Panc1 (cell line): ENCODE measurements at regions of chrX and their contacts with region 1.

Region 1: GRCh38 chrX:145213504-145213903 is 33.8 kb upstream of the SPANXN1 start:
- DNase-seq: no peak
- ATAC-seq: no peak
- H3K4me3 ChIP-seq: no peak overlapping the region
- H3K27ac ChIP-seq: no peak overlapping the region
- H3K4me1 ChIP-seq: no peaks in the 10 kb centered on the region
- H3K27me3 ChIP-seq: no peaks in the 10 kb centered on the region
- CTCF ChIP-seq: peak; percentile 40; the same call in 1 of the 2 replicates

Region 2: GRCh38 chrX:144918936-144919335 is 294.6 kb before region 1 on chrX:
- CTCF ChIA-PET with region 1: no interaction called
- POLR2A ChIA-PET with region 1: no interaction called
- in situ Hi-C with region 1: no loop called
- intact Hi-C with region 1: no loop called
- DNase-seq: no peak
- ATAC-seq: no peak
- H3K4me3 ChIP-seq: no peak overlapping the region
- H3K27ac ChIP-seq: no peak overlapping the region
- H3K4me1 ChIP-seq: no peaks in the 10 kb centered on the region
- H3K27me3 ChIP-seq: no peaks in the 10 kb centered on the region
- CTCF ChIP-seq: no peak

Region 3: GRCh38 chrX:145817331-145818185 is 604.1 kb after region 1 on chrX and contains the start of gene SLITRK2:
- CTCF ChIA-PET with region 1: no interaction called
- POLR2A ChIA-PET with region 1: no interaction called
- in situ Hi-C with region 1: no loop called
- intact Hi-C with region 1: loop called (anchors 10 kb)
- DNase-seq: no peak
- ATAC-seq: peak; percentile 62
- H3K4me3 ChIP-seq: peak within 1 kb of the TSS; percentile 22 to 51
- H3K27ac ChIP-seq: no peak within 1 kb of the TSS
- H3K4me1 ChIP-seq: 0 out of 2 replicates have a peak, but pooled peaks cover 4% of the 10 kb centered on the region
- H3K27me3 ChIP-seq: peaks cover 19% of the 10 kb centered on the region
- CTCF ChIP-seq: no peak
- total RNA-seq, gene SLITRK2: 0.59 TPM